Motor neuron (in vitro differentiated cells): ENCODE measurements at regions of chr18 and their contacts with region 1.

Region 1: DNA sequence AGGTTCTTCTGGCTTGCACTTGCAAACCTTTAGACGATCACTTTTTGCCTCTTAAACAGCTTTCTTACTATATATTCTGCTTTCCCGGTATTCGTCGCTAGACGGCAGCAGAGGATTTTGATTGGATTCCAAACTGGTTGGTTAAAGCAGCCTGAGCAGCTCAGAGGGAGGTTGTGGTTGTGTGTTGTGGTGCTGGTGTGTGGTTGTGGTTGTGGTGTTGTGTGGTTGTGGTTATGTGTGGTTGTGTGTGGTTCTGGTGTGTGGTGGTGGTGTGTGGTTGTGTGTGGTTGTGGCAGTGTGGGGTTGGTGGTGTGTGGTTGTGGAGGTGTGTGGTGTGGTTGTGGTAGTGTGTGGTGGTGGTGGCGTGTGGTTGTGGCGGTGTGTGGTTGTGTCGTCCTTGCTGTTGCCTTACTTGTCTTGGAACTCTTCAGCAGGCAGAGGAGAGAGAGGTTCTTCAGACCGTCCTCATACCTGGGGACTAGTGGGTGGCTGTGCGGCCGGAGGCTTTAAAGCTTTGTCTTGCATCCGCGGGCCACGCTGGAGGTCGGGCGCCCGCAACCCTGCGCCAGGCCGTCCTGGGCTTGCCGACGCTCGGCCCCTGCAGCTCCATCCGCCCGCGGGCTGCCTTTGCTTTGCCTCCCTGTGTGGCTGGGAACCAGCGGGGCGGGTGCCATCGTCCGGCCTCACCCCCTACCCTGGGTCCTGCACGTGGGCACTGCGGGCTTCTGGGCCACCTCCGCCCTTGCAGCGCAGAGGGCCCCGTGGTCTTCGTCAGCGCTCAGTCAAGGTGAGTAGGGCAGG is 190.8 kb downstream of the ARHGAP28 start:
- ATAC-seq: peak in 6 of 8 experiments; percentile 31 to 87 (median 58)
- H3K4me3 ChIP-seq: no peak overlapping the region
- H3K27ac ChIP-seq: no peak overlapping the region
- H3K4me1 ChIP-seq: no peaks in the 10 kb centered on the region

Region 2: DNA sequence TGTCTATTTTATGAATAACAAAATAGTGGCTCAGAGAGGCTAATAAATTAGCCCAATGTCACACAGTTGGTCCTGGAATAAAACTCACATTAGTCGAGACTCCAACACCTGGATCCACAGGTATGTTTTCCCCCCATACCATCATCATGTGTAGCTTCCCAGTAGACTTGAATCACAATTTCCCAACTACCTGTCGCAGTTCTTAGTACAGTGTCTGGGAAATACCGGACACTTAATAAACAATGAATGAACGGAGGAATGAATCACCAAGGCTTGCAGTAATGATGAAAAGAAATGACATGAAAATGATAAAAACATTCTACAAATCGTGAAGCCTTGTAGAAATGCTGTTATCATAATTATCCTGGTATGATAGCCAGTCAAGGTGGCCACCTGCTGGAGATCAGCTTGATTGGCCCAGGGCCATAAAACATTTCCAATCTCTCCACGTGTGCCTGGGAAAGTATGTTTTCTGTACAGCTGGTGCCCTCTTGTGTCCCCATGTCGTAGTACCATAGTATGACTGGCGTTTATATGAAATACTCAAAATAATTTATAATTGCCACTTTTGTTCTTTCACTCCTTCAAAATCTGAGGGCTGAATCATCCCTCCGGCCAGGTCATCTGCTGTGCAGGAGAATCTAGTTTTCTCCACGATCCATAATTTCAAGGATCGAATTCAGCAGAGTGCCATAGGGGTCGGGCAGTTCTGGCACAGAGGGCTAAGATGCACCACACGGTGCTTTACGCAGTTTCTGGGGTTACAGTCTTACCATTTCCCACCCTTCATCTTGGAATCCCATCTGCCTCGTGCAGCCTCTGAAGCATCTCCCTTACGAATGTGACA is 101.9 kb after region 1 on chr18:
- in situ Hi-C with region 1: loop called in 2 of 9 experiments (anchors 25 kb)
- ATAC-seq: peak in 7 of 8 experiments; percentile 32 to 97 (median 61)
- H3K4me3 ChIP-seq: no peak overlapping the region
- H3K27ac ChIP-seq: no peak overlapping the region
- H3K4me1 ChIP-seq: no peaks in the 10 kb centered on the region

Region 3: DNA sequence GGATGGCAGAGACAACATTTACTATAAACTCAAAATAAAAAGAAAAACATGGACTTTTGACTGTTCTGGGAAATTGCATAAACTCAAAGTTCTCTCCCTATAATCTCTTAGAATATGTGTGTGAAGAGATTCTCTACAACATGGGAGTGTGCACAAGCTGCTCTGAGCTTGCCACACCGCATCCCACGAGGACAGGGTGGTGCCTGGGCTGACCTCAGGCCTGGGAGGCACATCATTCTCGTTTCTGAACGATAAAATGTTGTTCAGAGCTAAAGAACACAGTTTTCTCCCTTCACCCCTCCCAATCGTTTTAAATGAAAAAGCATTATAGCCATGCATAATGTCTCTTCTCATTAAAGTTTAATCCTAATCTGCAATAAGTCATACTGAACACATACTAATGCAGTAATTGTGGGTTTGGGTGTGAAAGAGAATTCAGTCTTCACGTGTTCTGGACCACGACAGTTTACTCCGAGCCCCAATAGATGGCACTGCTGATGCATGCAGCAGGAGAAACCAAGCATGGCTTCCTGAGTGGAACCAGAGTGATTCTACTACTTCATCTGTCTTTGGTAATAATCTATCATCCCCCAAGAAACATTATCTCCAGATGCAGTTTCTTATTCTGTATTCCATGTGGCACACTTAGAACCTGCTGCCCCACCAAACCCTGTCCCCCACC is 244.2 kb after region 1 on chr18:
- in situ Hi-C with region 1: no loop called
- ATAC-seq: peak in 6 of 8 experiments; percentile 58 to 83 (median 71)
- H3K4me3 ChIP-seq: no peak overlapping the region
- H3K27ac ChIP-seq: no peak overlapping the region
- H3K4me1 ChIP-seq: no peaks in the 10 kb centered on the region